Posterior cingulate gyrus (tissue), 11 donors: ENCODE measurements at regions of chr14 and their contacts with region 1.

Region 1: GRCh38 chr14:63727774-63728728 is at the start of gene SGPP1:
- DNase-seq: peak; percentile 44 to 95 (median 61)

Region 2: GRCh38 chr14:63543000-63543825 is 184.8 kb before region 1 on chr14 and contains the start of gene PPP2R5E:
- intact Hi-C with region 1: loop called (anchors 1 kb)
- DNase-seq: peak; percentile 97 to 100 (median 98)

Region 3: GRCh38 chr14:63770187-63770807 is 42.2 kb after region 1 on chr14:
- intact Hi-C with region 1: loop called (anchors 1 kb)
- DNase-seq: peak in 5 of 10 donors; percentile 23 to 55 (median 37)